Panc1 (cell line): ENCODE measurements at regions of chr10 and their contacts with region 1.

Region 1: DNA sequence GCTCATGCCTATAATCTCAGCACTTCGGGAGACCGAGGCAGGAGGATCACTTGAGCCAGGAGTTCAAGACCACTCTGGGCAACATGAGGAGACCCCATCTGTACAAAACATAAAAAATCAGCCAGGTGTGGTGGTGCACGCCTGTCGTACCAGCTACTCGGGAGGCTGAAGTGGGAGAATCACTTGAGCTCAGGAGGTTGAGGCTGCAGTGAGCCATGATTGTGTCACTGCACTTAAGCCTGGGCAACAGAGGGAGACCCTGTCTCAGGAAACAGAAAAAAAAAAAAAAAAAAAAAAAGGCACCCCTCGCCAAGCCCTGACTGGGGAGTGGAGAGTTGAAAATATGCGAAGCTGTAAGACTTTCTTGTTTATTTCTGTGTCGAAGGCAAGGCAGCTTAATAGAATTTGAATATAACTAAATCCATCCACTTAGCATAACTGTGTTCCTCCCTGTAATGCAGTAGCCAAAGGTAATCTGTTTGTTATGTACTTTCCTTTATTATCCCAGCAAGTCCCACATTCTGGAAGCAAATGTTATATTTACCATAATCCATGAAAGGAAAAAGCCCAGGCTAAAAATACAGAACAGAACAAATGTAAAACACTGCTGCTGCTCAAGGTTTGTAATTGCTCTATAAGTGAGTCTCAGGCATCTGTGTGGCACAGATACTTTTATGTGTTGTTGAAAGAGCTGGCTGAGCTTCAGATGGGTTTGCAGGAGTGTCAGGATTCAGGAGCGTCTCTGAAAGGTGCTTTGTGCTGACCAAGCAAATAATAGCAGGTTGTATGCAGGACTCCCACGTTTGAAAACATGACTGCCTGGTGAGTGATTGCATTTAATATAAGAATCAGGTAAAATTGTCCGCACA is 127.2 kb downstream of the CELF2 start:
- DNase-seq: no peak
- ATAC-seq: no peak
- H3K4me3 ChIP-seq: no peak overlapping the region
- H3K27ac ChIP-seq: no peak overlapping the region
- H3K4me1 ChIP-seq: no peaks in the 10 kb centered on the region
- H3K27me3 ChIP-seq: no peaks in the 10 kb centered on the region
- CTCF ChIP-seq: no peak

Region 2: GRCh38 chr10:11272915-11273389 is 128.1 kb after region 1 on chr10:
- CTCF ChIA-PET with region 1: no interaction called
- POLR2A ChIA-PET with region 1: no interaction called
- in situ Hi-C with region 1: no loop called
- intact Hi-C with region 1: no loop called
- DNase-seq: no peak
- ATAC-seq: no peak
- H3K4me3 ChIP-seq: no peak overlapping the region
- H3K27ac ChIP-seq: no peak overlapping the region
- H3K4me1 ChIP-seq: no peaks in the 10 kb centered on the region
- H3K27me3 ChIP-seq: no peaks in the 10 kb centered on the region; the same call in 1 of the 2 replicates
- CTCF ChIP-seq: no peak

Region 3: DNA sequence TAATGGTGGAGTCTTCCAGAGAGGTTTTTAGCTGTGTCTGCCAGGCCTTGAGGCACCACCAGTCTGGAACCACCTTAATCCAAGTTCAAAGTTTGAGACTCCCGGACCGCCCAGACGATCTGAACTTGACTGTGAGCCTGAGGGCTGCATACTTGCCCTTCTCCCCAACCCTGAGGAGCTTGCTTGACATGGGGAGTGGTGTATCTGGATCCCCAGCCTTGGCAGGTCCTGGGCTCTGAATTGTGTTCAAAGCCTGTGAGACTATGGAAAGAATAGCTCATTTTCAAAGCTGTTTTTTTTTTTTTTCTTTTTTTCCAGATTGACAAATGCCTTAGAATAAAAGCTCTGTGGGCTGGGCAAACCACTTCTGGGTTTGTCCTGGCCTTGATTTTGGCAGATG is 1182.2 kb after region 1 on chr10:
- CTCF ChIA-PET with region 1: interaction called, 12 read pairs
- POLR2A ChIA-PET with region 1: no interaction called
- in situ Hi-C with region 1: no loop called
- intact Hi-C with region 1: no loop called
- DNase-seq: no peak
- ATAC-seq: no peak
- H3K4me3 ChIP-seq: no peak overlapping the region
- H3K27ac ChIP-seq: no peak overlapping the region
- H3K4me1 ChIP-seq: no peaks in the 10 kb centered on the region
- H3K27me3 ChIP-seq: no peaks in the 10 kb centered on the region
- CTCF ChIP-seq: no peak